Activated CD8-positive, alpha-beta T cell treated with anti-CD3 and anti-CD28 coated beads, Interleukin-2, amount 10 ng/mL, durations not matched to agents 7 days and 5 days (primary cell): ENCODE measurements at regions of chr11 and their contacts with region 1.

Region 1: DNA sequence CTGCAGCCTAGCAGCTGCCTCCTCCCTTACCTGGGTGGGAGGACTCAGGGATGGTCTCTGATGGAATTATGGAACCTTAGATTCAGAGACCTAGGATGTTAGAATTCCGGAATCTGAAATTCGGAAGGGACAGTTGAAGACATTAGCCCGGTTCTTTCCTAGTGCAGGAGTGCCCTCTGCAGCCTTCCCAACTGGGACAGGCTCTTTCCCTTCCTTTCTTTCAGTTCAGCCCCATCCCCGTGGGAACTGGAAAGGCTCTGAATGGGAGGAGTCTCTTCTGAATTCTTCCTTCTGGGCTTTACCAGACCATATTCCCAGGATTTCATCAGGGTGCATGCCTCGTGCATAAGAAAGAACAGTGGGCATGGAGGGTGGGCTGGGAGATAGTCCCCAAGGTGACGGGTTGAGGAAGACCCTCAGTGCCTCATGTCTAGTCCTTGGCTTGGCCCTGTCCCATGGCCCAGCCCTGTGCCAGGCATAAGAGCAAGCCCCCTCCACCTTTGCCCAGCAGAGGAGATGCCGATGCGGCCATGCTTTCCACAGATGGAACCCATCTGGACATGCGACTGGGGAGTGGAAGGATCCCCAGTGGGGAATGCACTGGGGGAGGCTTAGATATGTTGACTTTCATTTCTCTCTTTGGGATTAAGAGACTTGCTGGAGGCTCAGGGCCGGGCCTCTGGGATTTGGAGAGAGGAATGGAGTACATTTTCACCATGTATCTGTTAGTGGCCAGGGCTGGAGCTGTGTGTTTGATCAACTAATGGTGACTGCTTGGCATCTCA is 14.4 kb downstream of the DNAJB13 start:
- DNase-seq: no peak
- ATAC-seq: no peak
- H3K4me3 Mint-ChIP-seq: no peak overlapping the region
- H3K27ac Mint-ChIP-seq: no peak overlapping the region
- H3K4me1 Mint-ChIP-seq: peaks cover 31% of the 10 kb centered on the region
- H3K27me3 Mint-ChIP-seq: no peaks in the 10 kb centered on the region

Region 2: GRCh38 chr11:73833067-73833466 is 132.2 kb before region 1 on chr11:
- CTCF ChIA-PET with region 1: no interaction called
- POLR2A ChIA-PET with region 1: no interaction called
- DNase-seq: no peak
- ATAC-seq: no peak
- H3K4me3 Mint-ChIP-seq: no peak overlapping the region
- H3K27ac Mint-ChIP-seq: no peak overlapping the region
- H3K4me1 Mint-ChIP-seq: no peaks in the 10 kb centered on the region
- H3K27me3 Mint-ChIP-seq: no peaks in the 10 kb centered on the region

Region 3: GRCh38 chr11:74033046-74033445 is 67.8 kb after region 1 on chr11:
- CTCF ChIA-PET with region 1: interaction called, 13 read pairs
- POLR2A ChIA-PET with region 1: interaction called, 3 read pairs
- DNase-seq: no peak
- ATAC-seq: no peak
- H3K4me3 Mint-ChIP-seq: no peak overlapping the region
- H3K27ac Mint-ChIP-seq: no peak overlapping the region
- H3K4me1 Mint-ChIP-seq: peaks cover 20% of the 10 kb centered on the region
- H3K27me3 Mint-ChIP-seq: no peaks in the 10 kb centered on the region

Region 4: GRCh38 chr11:74094400-74094799 is 129.1 kb after region 1 on chr11:
- CTCF ChIA-PET with region 1: no interaction called
- POLR2A ChIA-PET with region 1: no interaction called
- DNase-seq: no peak
- ATAC-seq: no peak
- H3K4me3 Mint-ChIP-seq: no peak overlapping the region
- H3K27ac Mint-ChIP-seq: no peak overlapping the region
- H3K4me1 Mint-ChIP-seq: no peaks in the 10 kb centered on the region
- H3K27me3 Mint-ChIP-seq: no peaks in the 10 kb centered on the region

Region 5: GRCh38 chr11:74170694-74171629 is 205.7 kb after region 1 on chr11 and contains the starts of genes C2CD3 and PPME1:
- CTCF ChIA-PET with region 1: interaction called, 10 read pairs
- POLR2A ChIA-PET with region 1: interaction called, 3 read pairs
- DNase-seq: peak; percentile 99
- ATAC-seq: peak; percentile 98
- H3K4me3 Mint-ChIP-seq: no peak within 1 kb of the TSS
- H3K27ac Mint-ChIP-seq: no peak within 1 kb of the TSS
- H3K4me1 Mint-ChIP-seq: peaks cover 13% of the 10 kb centered on the region
- H3K27me3 Mint-ChIP-seq: no peaks in the 10 kb centered on the region
- total RNA-seq, gene C2CD3: 36.0 to 44.2 TPM
- total RNA-seq, gene PPME1: 28.6 to 29.6 TPM